ENCODE measurements at regions of chr2 and their contacts with region 1.

Region 1: GRCh38 chr2:231181860-231182512 is 16.4 kb upstream of the ARMC9 start:
- DNase-seq: peak; percentile 91
- H3K4me3 ChIP-seq: no peak overlapping the region
- H3K27ac ChIP-seq: peak overlapping the region; percentile 75
- H3K4me1 ChIP-seq: peaks cover 48% of the 10 kb centered on the region
- H3K27me3 ChIP-seq: no peaks in the 10 kb centered on the region
- CTCF ChIP-seq: no peak
- POLR2A ChIP-seq: no peak

Region 2: GRCh38 chr2:231168460-231169139 is 13.4 kb before region 1 on chr2:
- CTCF ChIA-PET with region 1: interaction called, 7 read pairs
- POLR2A ChIA-PET with region 1: no interaction called
- dilution Hi-C with region 1: no loop called
- intact Hi-C with region 1: loop called (anchors 2 kb)
- DNase-seq: peak; percentile 80
- H3K4me3 ChIP-seq: no peak overlapping the region
- H3K27ac ChIP-seq: peak overlapping the region; percentile 32
- H3K4me1 ChIP-seq: peaks cover 37% of the 10 kb centered on the region
- H3K27me3 ChIP-seq: no peaks in the 10 kb centered on the region
- CTCF ChIP-seq: no peak
- POLR2A ChIP-seq: peak; percentile 10

Measured in endothelial cell of umbilical vein (primary cell).